CD4-positive, alpha-beta memory T cell (primary cell): ENCODE measurements at regions of chr1 and their contacts with region 1.

Region 1: GRCh38 chr1:116570358-116571200 is at the start of gene CD58:
- DNase-seq: peak; percentile 74 to 81 (median 75)
- H3K4me3 ChIP-seq: peak within 1 kb of the TSS; percentile 80 to 93
- H3K4me3 Mint-ChIP-seq: peak within 1 kb of the TSS; percentile 89 to 99 (median 94)
- H3K27ac ChIP-seq: peak within 1 kb of the TSS; percentile 93
- H3K27ac Mint-ChIP-seq: peak within 1 kb of the TSS; percentile 90 to 98 (median 97)
- H3K4me1 ChIP-seq: peaks cover 62% of the 10 kb centered on the region
- H3K4me1 Mint-ChIP-seq: peaks cover 35 to 64% (median 49%) of the 10 kb centered on the region in 4 donors
- H3K27me3 ChIP-seq: no peaks in the 10 kb centered on the region
- H3K27me3 Mint-ChIP-seq: peaks cover 0 to 2% of the 10 kb centered on the region in 2 donors
- total RNA-seq, gene CD58: 25.2 to 30.9 TPM

Region 2: GRCh38 chr1:116359060-116359830 is 211.3 kb before region 1 on chr1:
- CTCF ChIA-PET with region 1: no interaction called
- POLR2A ChIA-PET with region 1: no interaction called
- intact Hi-C with region 1: no loop called
- DNase-seq: no peak
- H3K4me3 ChIP-seq: no peak overlapping the region
- H3K4me3 Mint-ChIP-seq: no peak overlapping the region
- H3K27ac ChIP-seq: no peak overlapping the region
- H3K27ac Mint-ChIP-seq: peak overlapping the region in 1 of 7 donors; percentile 46
- H3K4me1 ChIP-seq: peaks cover 6% of the 10 kb centered on the region
- H3K4me1 Mint-ChIP-seq: peaks cover 13 to 34% (median 20%) of the 10 kb centered on the region in 4 donors
- H3K27me3 ChIP-seq: no peaks in the 10 kb centered on the region
- H3K27me3 Mint-ChIP-seq: no peaks in the 10 kb centered on the region

Region 3: DNA sequence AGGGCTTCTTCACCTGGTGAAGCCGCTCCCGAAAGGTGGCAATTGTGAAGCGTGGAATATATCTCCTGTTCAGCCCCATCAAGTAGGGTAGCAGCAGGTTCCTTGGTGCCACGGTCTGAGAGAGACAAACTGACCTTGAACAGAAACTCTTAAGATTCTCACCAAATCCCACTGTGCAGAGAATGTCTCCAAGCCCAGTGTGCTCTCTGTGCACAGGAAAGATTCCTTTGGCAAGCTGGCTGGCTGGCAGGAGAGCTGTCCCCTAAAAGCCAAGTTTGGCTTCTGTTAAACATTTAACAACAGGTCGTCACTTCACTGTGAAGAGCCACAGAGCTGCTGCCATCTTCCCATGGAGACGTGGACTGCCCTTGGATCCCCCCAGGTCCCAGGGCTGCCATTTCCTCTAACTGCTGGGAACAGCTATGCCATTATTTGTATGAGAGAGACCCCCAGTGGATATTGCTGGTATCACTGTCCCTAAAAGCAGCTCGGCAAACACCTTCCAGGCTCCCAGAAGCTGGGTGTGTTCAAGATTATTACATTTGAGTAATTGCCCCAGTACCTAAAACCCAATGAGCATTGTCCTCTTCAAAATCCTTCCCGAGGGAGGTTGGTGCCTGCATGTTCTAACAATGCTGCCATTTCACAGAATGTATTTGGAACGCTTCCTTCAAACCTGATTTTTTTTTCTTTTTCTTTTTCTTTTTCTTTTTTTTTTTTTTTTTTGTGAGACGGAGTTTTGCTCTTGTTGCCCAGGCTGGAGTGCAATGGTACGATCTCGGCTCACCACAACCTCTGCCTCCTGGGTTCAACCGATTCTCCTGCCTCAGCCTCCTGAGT is 71.6 kb before region 1 on chr1:
- CTCF ChIA-PET with region 1: interaction called, 19 read pairs
- POLR2A ChIA-PET with region 1: interaction called, 23 read pairs
- intact Hi-C with region 1: loop called (anchors 1 kb)
- DNase-seq: peak; percentile 38 to 59 (median 54)
- H3K4me3 ChIP-seq: no peak overlapping the region
- H3K4me3 Mint-ChIP-seq: peak overlapping the region in 1 of 8 donors; percentile 27
- H3K27ac ChIP-seq: no peak overlapping the region
- H3K27ac Mint-ChIP-seq: peak overlapping the region in 6 of 7 donors; percentile 42 to 90 (median 74)
- H3K4me1 ChIP-seq: peaks cover 31% of the 10 kb centered on the region
- H3K4me1 Mint-ChIP-seq: peaks cover 26 to 60% (median 35%) of the 10 kb centered on the region in 4 donors
- H3K27me3 ChIP-seq: no peaks in the 10 kb centered on the region
- H3K27me3 Mint-ChIP-seq: no peaks in the 10 kb centered on the region

Region 4: GRCh38 chr1:116514708-116515525 is 55.7 kb before region 1 on chr1:
- CTCF ChIA-PET with region 1: interaction called, 12 read pairs
- POLR2A ChIA-PET with region 1: interaction called, 23 read pairs
- intact Hi-C with region 1: loop called (anchors 1 kb)
- DNase-seq: peak; percentile 70 to 90 (median 75)
- H3K4me3 ChIP-seq: peak overlapping the region; percentile 6 to 21
- H3K4me3 Mint-ChIP-seq: peak overlapping the region; percentile 65 to 88 (median 78)
- H3K27ac ChIP-seq: peak overlapping the region; percentile 74
- H3K27ac Mint-ChIP-seq: peak overlapping the region; percentile 94 to 99 (median 96)
- H3K4me1 ChIP-seq: peaks cover 67% of the 10 kb centered on the region
- H3K4me1 Mint-ChIP-seq: peaks cover 53 to 78% (median 62%) of the 10 kb centered on the region in 4 donors
- H3K27me3 ChIP-seq: no peaks in the 10 kb centered on the region
- H3K27me3 Mint-ChIP-seq: no peaks in the 10 kb centered on the region

Region 5: GRCh38 chr1:116556289-116557006 is 14.1 kb before region 1 on chr1:
- CTCF ChIA-PET with region 1: interaction called, 15 read pairs
- POLR2A ChIA-PET with region 1: interaction called, 29 read pairs
- intact Hi-C with region 1: loop called (anchors 1 kb)
- DNase-seq: peak; percentile 68 to 92 (median 72)
- H3K4me3 ChIP-seq: no peak overlapping the region
- H3K4me3 Mint-ChIP-seq: peak overlapping the region; percentile 14 to 74 (median 48)
- H3K27ac ChIP-seq: peak overlapping the region; percentile 53
- H3K27ac Mint-ChIP-seq: peak overlapping the region; percentile 79 to 99 (median 88)
- H3K4me1 ChIP-seq: peaks cover 77% of the 10 kb centered on the region
- H3K4me1 Mint-ChIP-seq: peaks cover 60 to 87% (median 75%) of the 10 kb centered on the region in 4 donors
- H3K27me3 ChIP-seq: no peaks in the 10 kb centered on the region
- H3K27me3 Mint-ChIP-seq: no peaks in the 10 kb centered on the region

Region 6: DNA sequence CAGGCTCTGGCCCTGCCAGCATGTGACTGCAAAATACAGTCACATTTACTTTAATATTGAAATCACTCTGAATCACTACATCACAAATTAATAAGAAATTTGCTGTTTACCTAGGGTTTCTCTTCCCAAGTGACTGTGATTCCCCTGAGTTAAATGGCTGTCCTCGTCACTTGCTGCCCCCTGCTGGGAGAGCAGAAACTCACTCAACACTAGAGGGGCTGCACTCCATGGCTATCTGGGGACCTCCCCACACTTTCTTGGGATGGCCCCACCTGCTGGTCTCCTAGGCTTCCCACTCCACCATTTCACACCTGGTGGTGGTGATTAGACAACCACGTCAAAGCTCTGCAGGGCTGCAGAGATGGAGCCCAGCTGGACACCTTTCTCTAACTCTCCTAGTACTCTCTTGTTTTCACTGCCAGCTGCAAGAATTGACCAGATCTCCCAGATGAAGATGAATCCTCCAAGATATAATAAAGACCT is 247.0 kb after region 1 on chr1:
- CTCF ChIA-PET with region 1: interaction called, 3 read pairs
- POLR2A ChIA-PET with region 1: no interaction called
- intact Hi-C with region 1: loop called (anchors 2 kb)
- DNase-seq: peak; percentile 67 to 77 (median 71)
- H3K4me3 ChIP-seq: no peak overlapping the region
- H3K4me3 Mint-ChIP-seq: peak overlapping the region in 7 of 8 donors; percentile 39 to 76 (median 60)
- H3K27ac ChIP-seq: no peak overlapping the region
- H3K27ac Mint-ChIP-seq: peak overlapping the region; percentile 79 to 96 (median 88)
- H3K4me1 ChIP-seq: peaks cover 36% of the 10 kb centered on the region
- H3K4me1 Mint-ChIP-seq: peaks cover 22 to 40% (median 29%) of the 10 kb centered on the region in 4 donors
- H3K27me3 ChIP-seq: no peaks in the 10 kb centered on the region
- H3K27me3 Mint-ChIP-seq: no peaks in the 10 kb centered on the region